ENCODE measurements at regions of chr16 and their contacts with region 1.

Region 1: DNA sequence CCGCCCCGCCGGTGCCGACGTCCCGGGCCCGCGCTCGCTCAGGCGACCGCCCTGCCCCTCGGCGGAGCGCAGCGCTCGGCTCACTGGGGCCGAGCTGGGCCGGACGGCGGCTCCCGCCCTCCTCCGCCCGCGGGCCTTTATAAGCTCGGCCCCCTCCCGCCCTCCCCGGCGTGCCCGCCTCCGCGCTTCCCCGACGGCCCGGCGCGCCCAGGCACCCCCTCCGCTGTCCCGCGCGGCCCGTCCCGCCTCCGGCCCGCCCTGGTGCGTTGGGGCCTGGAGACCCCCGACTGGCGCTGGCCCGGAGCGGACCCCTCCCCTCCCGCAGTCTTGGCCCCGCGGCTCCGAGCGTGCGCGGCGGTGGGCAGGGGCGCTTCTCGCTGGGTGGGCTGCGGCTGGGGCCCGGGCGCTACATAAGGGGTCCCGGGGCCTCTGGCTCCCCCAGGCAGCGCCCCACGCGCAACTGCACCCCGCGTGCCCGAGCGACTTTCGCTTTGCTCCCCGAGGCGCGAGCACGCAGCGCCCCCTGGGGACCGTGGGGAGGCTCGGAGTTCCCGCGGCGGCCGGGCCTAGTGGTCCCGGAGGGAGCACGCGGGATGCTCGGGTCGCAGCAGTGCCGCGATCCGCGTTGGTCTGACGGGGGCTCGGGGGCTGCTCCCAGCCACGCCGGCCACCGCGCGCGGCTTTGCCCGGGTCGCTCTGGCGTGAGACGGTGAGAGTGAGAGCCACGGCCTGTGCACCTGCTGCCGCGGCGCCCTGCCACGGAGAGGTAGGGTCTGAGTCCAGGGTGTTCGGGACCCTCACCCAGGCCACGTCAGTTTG is at the start of gene PIEZO1:
- DNase-seq: peak; percentile 62 to 70
- ATAC-seq: peak; percentile 51 to 60
- H3K4me3 ChIP-seq: peak within 1 kb of the TSS; percentile 99
- H3K27ac ChIP-seq: peak within 1 kb of the TSS; percentile 97 to 99
- H3K4me1 ChIP-seq: peaks cover 40% of the 10 kb centered on the region
- CTCF ChIP-seq: peak; percentile 89
- EP300 ChIP-seq: no peak
- POLR2A ChIP-seq: peak; percentile 81
- RAD21 ChIP-seq: peak; percentile 72 to 83
- polyA plus RNA-seq, gene PIEZO1: 26.1 and 35.9 TPM in 2 replicates

Region 2: GRCh38 chr16:88731699-88732098 is 53.6 kb before region 1 on chr16:
- CTCF ChIA-PET with region 1: no interaction called
- POLR2A ChIA-PET with region 1: no interaction called
- DNase-seq: peak in 1 of 2 experiments; percentile 83
- ATAC-seq: peak; percentile 28 to 61; a peak in 3 of 6 replicates
- H3K4me3 ChIP-seq: no peak overlapping the region
- H3K27ac ChIP-seq: peak overlapping the region in 1 of 2 experiments; percentile 42; a peak in 1 of 6 replicates
- H3K4me1 ChIP-seq: peaks cover 11% of the 10 kb centered on the region
- CTCF ChIP-seq: no peak
- EP300 ChIP-seq: no peak
- POLR2A ChIP-seq: no peak
- RAD21 ChIP-seq: no peak

Region 3: DNA sequence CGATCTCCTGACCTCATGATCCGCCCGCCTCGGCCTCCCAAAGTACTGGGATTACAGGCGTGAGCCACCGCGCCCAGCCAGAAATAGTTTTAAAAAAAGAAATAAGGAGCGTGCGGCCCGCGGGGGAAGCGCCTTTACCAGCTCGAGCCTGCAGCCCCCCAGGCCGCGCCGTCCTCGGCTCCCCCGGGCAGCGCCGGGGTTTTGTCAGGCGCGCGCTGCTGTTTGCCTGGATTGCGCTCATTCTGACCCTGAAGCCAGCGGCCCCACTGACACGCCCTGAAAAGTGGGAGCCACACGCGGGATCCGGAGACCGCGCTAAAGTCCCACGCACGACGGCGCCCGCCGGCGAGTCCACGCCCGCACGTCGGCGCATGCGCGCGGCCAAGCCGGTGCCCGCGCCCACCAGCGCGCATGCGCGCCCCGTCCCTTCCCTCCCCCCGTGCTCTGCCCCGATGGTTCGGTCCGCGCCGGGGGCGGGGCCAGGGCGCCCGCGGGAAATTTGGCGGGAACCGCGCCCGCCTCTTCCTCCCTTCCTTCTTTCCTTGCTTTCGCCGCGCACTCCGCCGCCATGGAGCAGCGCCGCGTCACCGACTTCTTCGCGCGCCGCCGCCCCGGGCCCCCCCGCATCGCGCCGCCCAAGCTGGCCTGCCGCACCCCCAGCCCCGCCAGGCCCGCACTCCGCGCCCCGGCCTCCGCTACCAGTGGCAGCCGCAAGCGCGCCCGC is 18.1 kb after region 1 on chr16 and contains the start of gene CDT1:
- CTCF ChIA-PET with region 1: interaction called, 41 read pairs
- POLR2A ChIA-PET with region 1: interaction called, 3 read pairs
- DNase-seq: peak; percentile 81 to 96
- ATAC-seq: peak; percentile 4 to 37; a peak in 4 of 6 replicates
- H3K4me3 ChIP-seq: peak within 1 kb of the TSS; percentile 73
- H3K27ac ChIP-seq: peak within 1 kb of the TSS; percentile 88 to 94
- H3K4me1 ChIP-seq: peaks cover 14% of the 10 kb centered on the region
- CTCF ChIP-seq: no peak
- EP300 ChIP-seq: no peak
- POLR2A ChIP-seq: peak; percentile 69
- RAD21 ChIP-seq: no peak
- polyA plus RNA-seq, gene CDT1: 3.4 and 3.8 TPM in 2 replicates

Region 4: GRCh38 chr16:88811769-88812512 is 26.6 kb after region 1 on chr16 and contains the start of gene APRT:
- CTCF ChIA-PET with region 1: interaction called, 7 read pairs
- POLR2A ChIA-PET with region 1: interaction called, 18 read pairs
- DNase-seq: peak; percentile 78 to 95
- ATAC-seq: peak; percentile 64 to 74
- H3K4me3 ChIP-seq: peak within 1 kb of the TSS; percentile 83
- H3K27ac ChIP-seq: peak within 1 kb of the TSS; percentile 98 to 99
- H3K4me1 ChIP-seq: peaks cover 21% of the 10 kb centered on the region
- CTCF ChIP-seq: peak; percentile 33; the same call in 2 of the 3 replicates
- EP300 ChIP-seq: no peak
- POLR2A ChIP-seq: peak; percentile 83
- RAD21 ChIP-seq: peak; percentile 31 to 44; a peak in 3 of 5 replicates
- polyA plus RNA-seq, gene APRT: 113 and 115 TPM in 2 replicates

Measured in A549 (cell line).